Activated T-helper 1 cell treated with anti-CD3 and anti-CD28 coated beads, Interleukin-12 subunit alpha, Interleukin-12 subunit beta, Interleukin-2, Interleukin-4 antibody, amounts not matched to agents 30 ng/mL and 10 ng/mL and 1 ng/mL, durations not matched to agents 14 hours and 24 hours and 36 hours (primary cell): ENCODE measurements at regions of chr6 and their contacts with region 1.

Region 1: GRCh38 chr6:11275598-11275997 is 43.1 kb upstream of the NEDD9 start:
- DNase-seq: no peak
- H3K4me3 Mint-ChIP-seq: peak overlapping the region; percentile 0
- H3K27ac Mint-ChIP-seq: peak overlapping the region; percentile 41
- H3K4me1 Mint-ChIP-seq: peaks cover 43% of the 10 kb centered on the region
- H3K27me3 Mint-ChIP-seq: no peaks in the 10 kb centered on the region

Region 2: DNA sequence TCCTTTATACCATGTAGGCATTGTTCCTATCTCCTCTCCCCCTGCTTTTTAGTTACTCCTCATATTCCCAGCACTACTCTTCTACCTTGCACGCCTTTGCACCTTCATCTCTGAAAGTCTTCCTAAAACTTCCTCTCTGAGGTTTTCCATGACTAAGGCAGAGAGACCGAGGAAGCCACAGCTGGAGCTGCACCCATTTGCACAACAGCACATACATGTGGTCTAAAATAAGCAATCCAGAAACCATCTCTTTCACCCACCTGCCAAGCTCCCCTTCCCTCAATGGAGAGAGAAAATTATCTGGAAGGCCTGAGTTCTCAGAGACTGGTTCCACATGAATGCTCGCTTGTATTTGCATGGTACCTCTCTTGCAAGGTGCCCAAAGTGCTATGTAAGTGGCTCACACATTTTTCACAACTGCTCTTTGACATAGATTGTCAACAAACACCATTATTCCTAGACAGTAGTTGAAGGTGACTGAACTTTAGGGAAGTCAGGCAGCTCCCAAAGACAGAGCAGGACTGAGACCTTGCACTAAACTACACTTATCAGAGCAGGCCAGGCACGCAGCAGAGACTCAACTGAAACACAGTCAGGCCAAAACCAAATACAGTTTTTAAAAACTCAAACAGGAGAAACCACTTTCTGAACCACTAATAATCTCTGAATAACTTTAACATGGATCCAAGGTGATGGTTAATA is 1173.9 kb before region 1 on chr6:
- intact Hi-C with region 1: no loop called
- DNase-seq: no peak
- H3K4me3 Mint-ChIP-seq: no peak overlapping the region
- H3K27ac Mint-ChIP-seq: no peak overlapping the region
- H3K4me1 Mint-ChIP-seq: no peaks in the 10 kb centered on the region
- H3K27me3 Mint-ChIP-seq: no peaks in the 10 kb centered on the region

Region 3: DNA sequence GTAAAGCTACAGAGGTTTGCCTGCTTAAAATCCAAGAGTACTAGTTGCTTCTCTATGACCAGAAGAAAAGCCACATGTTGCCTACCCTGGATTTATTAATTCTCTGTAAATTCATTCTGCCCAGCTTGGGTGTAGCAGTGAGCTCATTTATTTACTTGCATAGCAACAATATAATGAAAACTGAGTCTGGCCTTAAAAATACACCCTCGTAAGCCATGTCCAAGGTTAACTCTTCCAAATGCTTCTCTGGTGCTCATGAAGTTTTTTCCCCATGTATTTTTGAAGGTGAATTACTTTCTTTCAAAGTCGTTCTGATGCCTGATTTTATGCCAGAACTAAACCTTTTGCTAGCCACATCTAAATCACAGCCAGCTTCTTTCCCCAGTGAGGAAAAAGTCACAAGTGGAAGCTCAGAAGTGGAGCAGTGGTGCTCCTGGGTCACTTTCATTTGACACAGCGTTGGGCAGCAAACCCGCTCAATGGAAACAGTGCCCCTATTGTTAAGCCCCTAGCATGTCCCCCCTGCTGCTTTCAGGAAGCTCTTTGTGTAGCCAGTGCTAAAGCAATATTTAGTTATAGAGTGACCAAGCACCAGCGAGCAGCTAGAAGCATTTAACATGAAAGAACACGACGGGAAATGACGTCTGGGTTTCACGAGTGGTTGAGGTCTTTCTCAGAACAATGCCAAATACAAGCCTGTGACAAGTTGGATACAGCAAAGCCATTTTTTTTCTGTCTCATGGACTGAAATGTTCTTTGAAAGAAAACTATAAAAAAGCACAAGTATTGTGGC is 72.9 kb before region 1 on chr6:
- intact Hi-C with region 1: loop called (anchors 2 kb)
- DNase-seq: peak; percentile 43
- H3K4me3 Mint-ChIP-seq: peak overlapping the region; percentile 54
- H3K27ac Mint-ChIP-seq: peak overlapping the region; percentile 92
- H3K4me1 Mint-ChIP-seq: peaks cover 86% of the 10 kb centered on the region
- H3K27me3 Mint-ChIP-seq: no peaks in the 10 kb centered on the region

Region 4: DNA sequence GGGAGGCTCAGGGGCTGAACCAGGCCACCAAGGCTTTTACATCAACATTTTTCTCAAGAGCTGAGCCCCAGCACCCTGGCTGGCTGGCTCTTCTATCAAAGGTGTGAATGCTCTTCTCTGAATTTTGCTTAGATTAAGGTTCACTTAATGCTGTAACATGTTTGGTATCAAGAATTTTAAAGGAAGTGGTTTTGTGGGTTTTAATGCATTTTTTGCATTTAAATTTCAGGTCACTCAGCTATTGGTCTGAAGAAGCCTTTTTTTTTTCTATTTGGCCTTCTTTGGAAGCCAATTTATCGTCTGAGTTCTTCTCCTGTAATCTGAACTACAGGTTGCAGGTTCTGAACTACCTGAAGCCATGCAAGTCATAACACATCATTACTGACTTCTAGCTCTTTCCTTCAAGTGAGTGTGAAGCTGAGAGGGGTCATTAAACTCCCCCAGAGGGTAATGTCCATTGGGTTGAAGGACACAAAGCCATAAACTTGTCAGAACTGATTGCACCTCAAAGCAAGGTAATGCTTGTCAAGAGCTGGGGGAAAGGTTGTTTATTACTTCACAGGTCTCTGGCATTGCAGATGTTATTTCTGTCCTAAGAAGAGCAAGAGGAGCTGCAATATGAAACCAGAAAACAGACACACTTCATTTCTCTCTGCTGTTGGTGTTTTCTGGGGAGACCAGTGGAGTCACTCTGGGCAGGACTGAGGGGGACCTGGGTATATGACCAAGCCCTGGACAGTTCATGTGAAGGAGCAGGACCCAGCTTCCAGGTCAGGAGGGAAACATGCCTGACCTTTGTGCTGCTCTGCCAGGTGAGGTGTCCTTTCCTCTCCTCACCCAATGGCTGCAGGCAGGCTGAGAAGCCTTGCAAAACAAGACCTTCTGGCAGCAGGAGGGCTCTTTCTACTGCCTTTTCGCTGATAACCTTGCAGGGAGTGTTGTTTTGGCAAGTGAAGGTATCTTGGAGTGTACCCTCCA is 17.0 kb before region 1 on chr6:
- intact Hi-C with region 1: loop called (anchors 2 kb)
- DNase-seq: no peak
- H3K4me3 Mint-ChIP-seq: peak overlapping the region; percentile 8
- H3K27ac Mint-ChIP-seq: peak overlapping the region; percentile 65
- H3K4me1 Mint-ChIP-seq: peaks cover 57% of the 10 kb centered on the region
- H3K27me3 Mint-ChIP-seq: no peaks in the 10 kb centered on the region

Region 5: GRCh38 chr6:11317885-11318771 is 42.5 kb after region 1 on chr6:
- intact Hi-C with region 1: loop called (anchors 1 kb)
- DNase-seq: peak; percentile 63
- H3K4me3 Mint-ChIP-seq: no peak overlapping the region
- H3K27ac Mint-ChIP-seq: peak overlapping the region; percentile 92
- H3K4me1 Mint-ChIP-seq: peaks cover 64% of the 10 kb centered on the region
- H3K27me3 Mint-ChIP-seq: no peaks in the 10 kb centered on the region

Region 6: GRCh38 chr6:11381801-11382513 is 106.4 kb after region 1 on chr6:
- intact Hi-C with region 1: loop called (anchors 1 kb)
- DNase-seq: peak; percentile 69
- H3K4me3 Mint-ChIP-seq: peak overlapping the region; percentile 92
- H3K27ac Mint-ChIP-seq: peak overlapping the region; percentile 96
- H3K4me1 Mint-ChIP-seq: peaks cover 75% of the 10 kb centered on the region
- H3K27me3 Mint-ChIP-seq: no peaks in the 10 kb centered on the region